Endothelial cell of umbilical vein (primary cell): ENCODE measurements at regions of chr14 and their contacts with region 1.

Region 1: DNA sequence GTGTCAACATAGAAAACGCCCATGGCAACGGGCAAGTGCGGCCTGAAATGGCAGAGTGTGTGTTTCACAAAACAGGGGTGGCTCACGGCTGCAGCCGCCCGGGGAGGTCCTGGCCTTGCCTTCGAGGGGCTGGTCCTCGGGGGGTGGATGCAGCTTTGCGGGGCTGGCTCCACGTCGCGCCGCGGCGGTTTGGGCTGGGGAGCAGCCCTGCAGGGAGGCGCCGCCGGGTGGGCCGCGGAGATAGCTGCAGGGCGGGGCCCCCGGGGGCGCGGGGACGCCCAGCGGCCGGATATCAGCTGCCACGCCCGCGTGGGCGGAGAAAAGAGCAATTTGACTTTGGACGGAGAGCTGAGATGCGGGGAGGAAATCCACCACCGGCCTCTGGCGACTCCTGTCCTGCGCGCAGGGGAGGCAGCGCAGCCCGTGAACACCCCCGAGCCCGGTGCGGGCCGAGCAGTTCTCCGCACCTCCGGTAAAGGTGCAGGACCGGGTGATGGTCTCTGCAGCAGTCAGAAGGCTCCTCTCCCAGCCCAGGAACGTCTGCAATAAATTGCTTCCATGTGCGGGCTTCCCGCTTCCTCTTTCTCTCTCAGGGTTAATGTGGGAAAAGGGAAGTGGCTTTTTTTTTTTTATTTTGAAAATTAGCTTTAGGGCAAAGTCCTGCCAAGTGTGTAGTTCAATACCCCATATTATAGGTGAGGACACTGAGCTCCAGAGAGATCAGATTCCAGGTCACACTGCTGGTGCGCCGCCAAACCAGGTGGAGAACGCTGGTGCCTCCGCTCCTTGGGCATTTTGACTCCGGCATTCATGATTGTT is 110.5 kb downstream of the ARF6 start:
- DNase-seq: peak; percentile 31
- H3K4me3 ChIP-seq: peak overlapping the region; percentile 38 to 67 (median 57)
- H3K27ac ChIP-seq: no peak overlapping the region
- H3K4me1 ChIP-seq: peaks cover 39% of the 10 kb centered on the region
- H3K27me3 ChIP-seq: no peaks in the 10 kb centered on the region
- CTCF ChIP-seq: no peak
- POLR2A ChIP-seq: peak; percentile 64

Region 2: DNA sequence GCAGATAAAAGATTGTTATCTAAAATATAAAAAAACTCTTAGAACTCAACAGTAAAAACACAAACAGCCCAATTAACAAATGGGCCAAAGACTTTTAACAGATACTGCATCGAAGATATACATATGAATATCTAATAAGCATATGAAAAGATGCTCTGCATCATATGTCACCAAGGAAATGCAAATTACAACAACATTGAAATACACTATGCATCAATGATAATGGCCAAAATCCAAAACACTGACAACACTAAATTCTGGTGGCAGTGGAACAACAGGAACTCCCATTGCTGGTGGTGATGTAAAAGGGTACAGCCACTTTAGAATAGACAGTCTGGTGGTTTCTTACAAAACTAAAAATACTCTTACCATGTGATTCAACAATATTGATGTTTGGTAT is 194.6 kb before region 1 on chr14:
- CTCF ChIA-PET with region 1: no interaction called
- POLR2A ChIA-PET with region 1: no interaction called
- dilution Hi-C with region 1: no loop called
- intact Hi-C with region 1: no loop called
- DNase-seq: no peak
- H3K4me3 ChIP-seq: no peak overlapping the region
- H3K27ac ChIP-seq: no peak overlapping the region
- H3K4me1 ChIP-seq: no peaks in the 10 kb centered on the region
- H3K27me3 ChIP-seq: no peaks in the 10 kb centered on the region
- CTCF ChIP-seq: no peak
- POLR2A ChIP-seq: no peak

Region 3: GRCh38 chr14:49867831-49868723 is 135.3 kb before region 1 on chr14:
- CTCF ChIA-PET with region 1: interaction called, 11 read pairs
- POLR2A ChIA-PET with region 1: interaction called, 4 read pairs
- dilution Hi-C with region 1: no loop called
- intact Hi-C with region 1: no loop called
- DNase-seq: peak; percentile 95
- H3K4me3 ChIP-seq: peak overlapping the region; percentile 43 to 69 (median 50)
- H3K27ac ChIP-seq: peak overlapping the region; percentile 64
- H3K4me1 ChIP-seq: peaks cover 17% of the 10 kb centered on the region
- H3K27me3 ChIP-seq: no peaks in the 10 kb centered on the region
- CTCF ChIP-seq: no peak
- POLR2A ChIP-seq: peak; percentile 87

Region 4: DNA sequence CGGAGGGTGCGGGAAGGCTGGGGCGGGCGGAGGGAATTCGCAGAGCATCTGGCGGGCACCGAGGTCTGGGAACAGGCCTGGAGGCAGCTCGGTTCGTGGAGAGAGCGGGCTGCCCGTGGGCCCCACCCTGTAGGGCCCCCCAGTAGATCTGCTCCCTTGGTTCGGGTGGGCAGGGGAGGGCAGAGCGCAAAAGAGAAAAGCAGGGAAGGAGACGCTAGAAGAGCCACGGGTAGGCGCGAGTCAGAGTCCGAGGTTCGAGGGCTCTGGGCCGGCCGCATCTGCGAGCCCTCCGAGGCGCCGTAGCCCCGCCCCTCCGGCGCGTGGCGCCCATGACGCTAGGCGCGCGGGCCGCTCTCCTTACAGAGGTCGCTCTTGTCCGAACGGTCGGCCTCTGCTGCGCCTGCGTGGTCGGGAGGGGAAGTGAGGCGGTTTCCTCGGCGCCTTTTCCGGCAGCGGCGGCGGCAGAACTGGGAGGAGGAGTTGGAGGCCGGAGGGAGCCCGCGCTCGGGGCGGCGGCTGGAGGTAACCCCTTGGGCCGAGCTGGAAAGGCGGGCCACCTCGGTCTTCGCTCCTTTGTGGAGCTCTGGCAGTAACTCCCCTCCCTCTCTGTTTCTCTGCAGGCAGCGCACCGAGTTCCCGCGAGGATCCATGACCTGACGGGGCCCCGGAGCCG is 110.7 kb before region 1 on chr14 and contains the start of gene ARF6:
- CTCF ChIA-PET with region 1: interaction called, 3 read pairs
- POLR2A ChIA-PET with region 1: interaction called, 3 read pairs
- dilution Hi-C with region 1: no loop called
- intact Hi-C with region 1: loop called (anchors 1 kb)
- DNase-seq: peak; percentile 97
- H3K4me3 ChIP-seq: peak within 1 kb of the TSS; percentile 27 to 92 (median 70)
- H3K27ac ChIP-seq: peak within 1 kb of the TSS; percentile 98
- H3K4me1 ChIP-seq: peaks cover 31% of the 10 kb centered on the region
- H3K27me3 ChIP-seq: no peaks in the 10 kb centered on the region
- CTCF ChIP-seq: no peak
- POLR2A ChIP-seq: peak; percentile 91
- total RNA-seq, gene ARF6: 73.2 and 73.6 TPM in 2 replicates

Region 5: DNA sequence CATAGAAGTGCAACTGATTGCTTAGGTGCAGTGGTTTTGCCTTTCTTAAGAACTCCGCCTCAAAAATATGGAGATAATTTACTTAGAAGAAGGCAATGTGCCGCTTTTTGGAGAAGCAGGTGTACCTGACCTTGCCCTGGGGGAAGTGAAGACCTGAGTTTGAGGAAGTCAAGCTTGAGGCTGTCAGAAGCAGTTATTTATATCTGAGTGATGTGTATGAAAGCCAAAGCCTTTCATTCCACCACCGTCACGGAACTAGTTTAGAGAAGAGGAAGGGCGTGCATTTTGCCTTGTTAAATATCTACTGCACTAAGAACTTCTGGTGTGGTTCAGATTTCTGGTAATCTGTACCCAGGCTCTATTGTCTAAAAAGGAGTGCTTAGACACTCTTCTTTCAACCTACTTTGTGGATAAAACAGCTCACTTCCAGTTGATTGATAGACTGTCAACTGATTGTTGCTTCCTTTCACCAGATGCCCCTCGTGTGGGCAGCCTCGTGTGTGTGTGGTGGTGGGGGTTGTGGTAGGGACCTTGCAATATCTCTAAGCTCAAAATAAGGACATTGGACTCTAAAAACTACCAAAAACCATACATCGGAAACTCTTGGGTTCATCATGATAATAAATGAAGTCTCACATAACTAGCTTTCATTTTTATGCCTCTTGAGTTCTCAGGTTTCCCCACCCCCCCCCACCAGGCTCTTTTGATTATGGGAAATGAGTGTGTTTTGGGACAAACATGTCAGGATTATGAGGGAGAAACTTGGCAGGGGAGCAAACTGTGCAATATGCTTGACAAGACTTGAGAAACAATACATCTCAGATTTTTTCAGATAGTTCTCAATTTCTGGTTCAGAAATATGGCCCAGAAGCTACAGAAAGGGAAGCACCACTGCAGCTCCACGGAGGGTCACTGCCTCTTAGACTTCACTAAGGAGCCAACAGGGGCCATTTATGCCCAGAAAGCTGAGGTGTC is 32.0 kb before region 1 on chr14:
- CTCF ChIA-PET with region 1: interaction called, 7 read pairs
- POLR2A ChIA-PET with region 1: interaction called, 6 read pairs
- dilution Hi-C with region 1: no loop called
- intact Hi-C with region 1: loop called (anchors 2 kb)
- DNase-seq: peak; percentile 51
- H3K4me3 ChIP-seq: no peak overlapping the region
- H3K27ac ChIP-seq: peak overlapping the region; percentile 75
- H3K4me1 ChIP-seq: peaks cover 50% of the 10 kb centered on the region
- H3K27me3 ChIP-seq: no peaks in the 10 kb centered on the region
- CTCF ChIP-seq: no peak
- POLR2A ChIP-seq: no peak

Region 6: GRCh38 chr14:50045039-50045711 is 41.8 kb after region 1 on chr14:
- CTCF ChIA-PET with region 1: interaction called, 3 read pairs
- POLR2A ChIA-PET with region 1: no interaction called
- dilution Hi-C with region 1: no loop called
- intact Hi-C with region 1: loop called (anchors 1 kb)
- DNase-seq: peak; percentile 69
- H3K4me3 ChIP-seq: no peak overlapping the region
- H3K27ac ChIP-seq: no peak overlapping the region
- H3K4me1 ChIP-seq: peaks cover 35% of the 10 kb centered on the region
- H3K27me3 ChIP-seq: no peaks in the 10 kb centered on the region
- CTCF ChIP-seq: no peak
- POLR2A ChIP-seq: no peak

Region 7: DNA sequence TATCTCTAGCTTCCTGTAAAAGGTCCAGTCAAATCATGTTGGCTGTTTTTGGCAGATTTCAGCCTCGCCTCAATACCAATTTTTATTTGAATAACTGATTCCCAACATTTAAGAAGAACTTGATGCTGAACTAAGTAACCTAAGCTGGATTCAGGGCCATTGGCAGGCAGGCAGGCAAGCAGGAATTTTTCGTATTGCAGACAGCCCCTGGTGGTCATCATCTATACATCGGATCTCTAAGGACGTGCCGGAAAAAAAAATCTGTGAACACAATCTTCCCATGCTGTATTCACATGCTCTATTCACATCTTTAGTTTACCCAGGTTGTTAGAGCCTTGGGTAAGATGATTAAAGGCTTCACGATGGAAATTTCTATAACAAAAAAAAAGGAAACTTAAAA is 105.9 kb after region 1 on chr14:
- CTCF ChIA-PET with region 1: interaction called, 5 read pairs
- POLR2A ChIA-PET with region 1: no interaction called
- dilution Hi-C with region 1: no loop called
- intact Hi-C with region 1: loop called (anchors 5 kb)
- DNase-seq: peak; percentile 11
- H3K4me3 ChIP-seq: no peak overlapping the region
- H3K27ac ChIP-seq: no peak overlapping the region
- H3K4me1 ChIP-seq: no peaks in the 10 kb centered on the region
- H3K27me3 ChIP-seq: no peaks in the 10 kb centered on the region
- CTCF ChIP-seq: peak in 1 of 2 donors; percentile 23
- POLR2A ChIP-seq: no peak